CD4-positive, alpha-beta T cell (primary cell): ENCODE measurements at regions of chr7 and their contacts with region 1.

Region 1: DNA sequence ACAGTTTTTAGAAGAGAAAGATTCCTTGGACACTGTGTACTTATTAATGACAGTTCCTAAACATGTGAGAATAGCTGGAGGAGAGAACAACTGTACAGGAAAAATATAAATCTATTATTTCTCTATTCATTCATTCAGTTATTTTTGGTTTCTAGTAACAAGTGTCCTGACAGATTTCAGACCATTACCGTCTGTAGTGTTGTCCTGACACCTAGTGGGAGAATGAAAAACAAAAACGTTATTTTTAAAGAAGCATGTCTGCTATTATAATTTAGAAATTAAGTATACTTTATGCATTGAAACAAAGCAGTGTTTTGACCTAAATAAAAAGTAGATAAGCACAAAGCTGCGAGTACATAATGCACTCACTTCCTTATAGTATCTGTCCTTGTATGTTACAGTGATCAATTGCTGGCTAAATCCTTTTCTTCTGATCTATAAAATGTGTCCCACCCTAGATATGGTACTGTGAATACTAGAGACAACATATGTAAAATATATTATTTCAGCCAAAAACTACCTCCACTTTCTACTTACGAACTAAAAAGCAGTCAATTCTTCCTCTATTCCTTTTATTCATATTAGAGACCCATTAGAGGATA is 575.6 kb downstream of the ARL4A start:
- DNase-seq: peak in 4 of 14 experiments; percentile 3 to 62 (median 56)
- ATAC-seq: peak; percentile 46
- H3K4me3 ChIP-seq: no peak overlapping the region
- H3K4me3 Mint-ChIP-seq: no peak overlapping the region
- H3K27ac ChIP-seq: no peak overlapping the region
- H3K27ac Mint-ChIP-seq: no peak overlapping the region
- H3K4me1 ChIP-seq: no peaks in the 10 kb centered on the region
- H3K4me1 Mint-ChIP-seq: no peaks in the 10 kb centered on the region
- H3K27me3 ChIP-seq: peaks cover 0 to 2% of the 10 kb centered on the region in 2 experiments
- H3K27me3 Mint-ChIP-seq: peaks cover 8% of the 10 kb centered on the region
- CTCF ChIP-seq: peak; percentile 63

Region 2: GRCh38 chr7:12524794-12525386 is 738.1 kb before region 1 on chr7:
- CTCF ChIA-PET with region 1: interaction called, 3 read pairs
- POLR2A ChIA-PET with region 1: no interaction called
- intact Hi-C with region 1: loop called in 1 of 2 experiments (anchors 2 kb)
- DNase-seq: peak in 3 of 14 experiments; percentile 43 to 60 (median 54)
- ATAC-seq: no peak
- H3K4me3 ChIP-seq: no peak overlapping the region
- H3K4me3 Mint-ChIP-seq: no peak overlapping the region
- H3K27ac ChIP-seq: no peak overlapping the region
- H3K27ac Mint-ChIP-seq: no peak overlapping the region
- H3K4me1 ChIP-seq: no peaks in the 10 kb centered on the region
- H3K4me1 Mint-ChIP-seq: no peaks in the 10 kb centered on the region
- H3K27me3 ChIP-seq: peaks cover 0 to 12% of the 10 kb centered on the region in 2 experiments
- H3K27me3 Mint-ChIP-seq: peaks cover 38% of the 10 kb centered on the region
- CTCF ChIP-seq: peak; percentile 80

Region 3: GRCh38 chr7:12638851-12639467 is 624.1 kb before region 1 on chr7:
- CTCF ChIA-PET with region 1: interaction called, 10 read pairs
- POLR2A ChIA-PET with region 1: no interaction called
- intact Hi-C with region 1: loop called (anchors 1 kb)
- DNase-seq: peak in 3 of 14 experiments; percentile 62 to 67 (median 66)
- ATAC-seq: peak; percentile 55
- H3K4me3 ChIP-seq: no peak overlapping the region
- H3K4me3 Mint-ChIP-seq: no peak overlapping the region
- H3K27ac ChIP-seq: no peak overlapping the region
- H3K27ac Mint-ChIP-seq: no peak overlapping the region
- H3K4me1 ChIP-seq: peaks cover 4% of the 10 kb centered on the region
- H3K4me1 Mint-ChIP-seq: peaks cover 29% of the 10 kb centered on the region
- H3K27me3 ChIP-seq: no peaks in the 10 kb centered on the region
- H3K27me3 Mint-ChIP-seq: no peaks in the 10 kb centered on the region
- CTCF ChIP-seq: peak; percentile 81

Region 4: GRCh38 chr7:12674849-12675248 is 588.2 kb before region 1 on chr7:
- CTCF ChIA-PET with region 1: interaction called, 3 read pairs
- POLR2A ChIA-PET with region 1: no interaction called
- intact Hi-C with region 1: loop called in 1 of 2 experiments (anchors 1 kb)
- DNase-seq: peak in 11 of 14 experiments; percentile 10 to 86 (median 25)
- ATAC-seq: peak; percentile 92
- H3K4me3 ChIP-seq: no peak overlapping the region
- H3K4me3 Mint-ChIP-seq: no peak overlapping the region
- H3K27ac ChIP-seq: no peak overlapping the region
- H3K27ac Mint-ChIP-seq: no peak overlapping the region
- H3K4me1 ChIP-seq: peaks cover 7% of the 10 kb centered on the region
- H3K4me1 Mint-ChIP-seq: peaks cover 17% of the 10 kb centered on the region
- H3K27me3 ChIP-seq: no peaks in the 10 kb centered on the region
- H3K27me3 Mint-ChIP-seq: no peaks in the 10 kb centered on the region
- CTCF ChIP-seq: peak; percentile 58

Region 5: DNA sequence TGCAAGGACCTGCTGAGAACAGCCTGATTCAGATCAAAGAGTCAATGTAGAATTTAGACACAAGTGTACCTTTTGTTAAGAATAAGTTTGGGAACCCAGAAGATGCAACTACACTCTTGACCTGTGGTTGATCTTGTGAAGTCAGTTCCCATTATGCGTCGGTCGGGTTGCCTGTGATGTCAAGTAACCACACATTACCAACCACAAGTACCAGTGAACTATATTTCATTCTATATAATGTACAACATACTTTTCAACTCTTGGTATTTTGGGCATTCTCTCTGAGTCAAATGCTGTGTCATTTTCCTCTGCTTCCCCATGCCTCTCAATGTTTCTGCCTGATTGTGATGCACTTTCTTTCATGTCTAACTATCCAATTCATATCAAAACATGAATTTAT is 300.2 kb after region 1 on chr7:
- CTCF ChIA-PET with region 1: no interaction called
- POLR2A ChIA-PET with region 1: no interaction called
- intact Hi-C with region 1: no loop called
- DNase-seq: no peak
- ATAC-seq: no peak
- H3K4me3 ChIP-seq: no peak overlapping the region
- H3K4me3 Mint-ChIP-seq: no peak overlapping the region
- H3K27ac ChIP-seq: no peak overlapping the region
- H3K27ac Mint-ChIP-seq: no peak overlapping the region
- H3K4me1 ChIP-seq: no peaks in the 10 kb centered on the region
- H3K4me1 Mint-ChIP-seq: no peaks in the 10 kb centered on the region
- H3K27me3 ChIP-seq: no peaks in the 10 kb centered on the region
- H3K27me3 Mint-ChIP-seq: no peaks in the 10 kb centered on the region
- CTCF ChIP-seq: no peak